Posterior vena cava (tissue), 2 donors: ENCODE measurements at regions of chr10 and their contacts with region 1.

Region 1: DNA sequence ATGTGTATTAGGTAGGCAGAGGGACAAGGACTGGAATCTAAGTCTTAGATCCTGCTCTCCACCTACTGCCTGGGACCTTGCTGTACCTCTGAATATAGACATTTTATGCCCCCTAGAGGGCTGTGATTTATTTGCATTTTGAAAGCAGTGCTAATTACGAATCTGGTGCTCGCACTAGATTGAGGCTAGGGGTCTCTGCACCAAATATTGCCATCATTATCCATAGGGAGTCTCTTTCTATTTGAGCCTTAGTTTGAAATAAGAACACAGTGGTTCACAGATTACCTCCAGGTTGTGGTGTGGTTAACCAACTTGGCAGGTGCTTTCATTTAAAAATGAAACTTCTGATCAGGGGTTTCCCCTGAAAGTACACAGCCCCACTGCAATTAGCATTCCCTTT is 41.8 kb downstream of the CNNM1 start:
- DNase-seq: no peak

Region 2: GRCh38 chr10:98023024-98023423 is 1348.0 kb before region 1 on chr10:
- intact Hi-C with region 1: loop called in 1 of 2 experiments (anchors 5 kb)
- DNase-seq: no peak

Region 3: GRCh38 chr10:99248824-99249223 is 122.2 kb before region 1 on chr10:
- intact Hi-C with region 1: no loop called
- DNase-seq: no peak